ENCODE measurements at regions of chr1 and their contacts with region 1.

Region 1: DNA sequence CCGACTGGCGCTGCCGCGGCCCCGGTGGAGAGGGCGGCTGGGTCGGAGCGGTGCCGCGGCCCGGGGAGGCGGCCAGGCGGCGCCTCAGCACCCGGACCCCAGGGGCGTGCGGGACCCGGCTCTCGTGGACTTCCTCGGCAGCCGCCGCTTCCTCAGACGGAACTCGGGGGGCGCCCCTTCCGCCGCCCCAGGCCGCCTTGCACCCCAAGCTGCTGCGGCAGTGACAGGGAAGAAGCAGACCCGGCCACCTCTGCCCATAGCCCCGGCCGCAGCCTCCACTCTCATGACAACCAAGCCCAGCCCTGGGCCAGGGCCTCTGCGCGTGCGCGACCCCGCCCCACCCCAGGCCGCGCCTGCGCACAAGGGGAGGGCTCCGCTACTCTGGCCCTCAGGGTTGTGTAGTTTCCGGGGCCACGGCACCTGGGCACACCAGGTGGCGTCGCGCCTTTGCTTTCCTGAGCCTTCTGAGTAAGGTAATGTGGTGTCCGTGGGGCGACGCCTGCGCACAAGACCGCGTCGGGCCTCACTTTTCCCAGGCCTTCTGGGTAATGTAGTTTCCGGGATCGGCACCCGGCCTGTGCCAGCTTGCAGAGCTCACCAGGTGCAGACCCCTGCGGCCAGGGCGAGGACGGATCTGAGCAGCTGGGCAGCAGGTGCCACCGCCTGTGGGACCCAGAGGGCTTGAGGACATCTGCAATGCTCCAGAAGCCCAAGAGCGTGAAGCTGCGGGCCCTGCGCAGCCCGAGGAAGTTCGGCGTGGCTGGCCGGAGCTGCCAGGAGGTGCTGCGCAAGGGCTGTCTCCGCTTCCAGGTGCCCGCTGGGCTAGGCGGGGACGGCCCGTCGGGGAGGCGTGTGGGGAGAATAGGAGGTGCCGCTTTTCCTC is at the starts of genes CEP104 and DFFB:
- DNase-seq: peak; percentile 97
- ATAC-seq: peak; percentile 98
- H3K4me3 Mint-ChIP-seq: peak within 1 kb of the TSS; percentile 96
- H3K27ac Mint-ChIP-seq: peak within 1 kb of the TSS; percentile 91
- H3K4me1 Mint-ChIP-seq: peaks cover 32% of the 10 kb centered on the region
- H3K27me3 Mint-ChIP-seq: no peaks in the 10 kb centered on the region
- total RNA-seq, gene CEP104: 41.2 to 47.0 TPM
- total RNA-seq, gene DFFB: 8.8 to 10.2 TPM

Region 2: GRCh38 chr1:3900119-3900968 is 43.2 kb after region 1 on chr1 and contains the start of gene C1orf174:
- CTCF ChIA-PET with region 1: interaction called, 37 read pairs
- POLR2A ChIA-PET with region 1: interaction called, 12 read pairs
- DNase-seq: peak; percentile 96
- ATAC-seq: peak; percentile 87
- H3K4me3 Mint-ChIP-seq: peak within 1 kb of the TSS; percentile 96
- H3K27ac Mint-ChIP-seq: peak within 1 kb of the TSS; percentile 99
- H3K4me1 Mint-ChIP-seq: peaks cover 66% of the 10 kb centered on the region
- H3K27me3 Mint-ChIP-seq: no peaks in the 10 kb centered on the region
- total RNA-seq, gene C1orf174: 28.5 TPM

Region 3: DNA sequence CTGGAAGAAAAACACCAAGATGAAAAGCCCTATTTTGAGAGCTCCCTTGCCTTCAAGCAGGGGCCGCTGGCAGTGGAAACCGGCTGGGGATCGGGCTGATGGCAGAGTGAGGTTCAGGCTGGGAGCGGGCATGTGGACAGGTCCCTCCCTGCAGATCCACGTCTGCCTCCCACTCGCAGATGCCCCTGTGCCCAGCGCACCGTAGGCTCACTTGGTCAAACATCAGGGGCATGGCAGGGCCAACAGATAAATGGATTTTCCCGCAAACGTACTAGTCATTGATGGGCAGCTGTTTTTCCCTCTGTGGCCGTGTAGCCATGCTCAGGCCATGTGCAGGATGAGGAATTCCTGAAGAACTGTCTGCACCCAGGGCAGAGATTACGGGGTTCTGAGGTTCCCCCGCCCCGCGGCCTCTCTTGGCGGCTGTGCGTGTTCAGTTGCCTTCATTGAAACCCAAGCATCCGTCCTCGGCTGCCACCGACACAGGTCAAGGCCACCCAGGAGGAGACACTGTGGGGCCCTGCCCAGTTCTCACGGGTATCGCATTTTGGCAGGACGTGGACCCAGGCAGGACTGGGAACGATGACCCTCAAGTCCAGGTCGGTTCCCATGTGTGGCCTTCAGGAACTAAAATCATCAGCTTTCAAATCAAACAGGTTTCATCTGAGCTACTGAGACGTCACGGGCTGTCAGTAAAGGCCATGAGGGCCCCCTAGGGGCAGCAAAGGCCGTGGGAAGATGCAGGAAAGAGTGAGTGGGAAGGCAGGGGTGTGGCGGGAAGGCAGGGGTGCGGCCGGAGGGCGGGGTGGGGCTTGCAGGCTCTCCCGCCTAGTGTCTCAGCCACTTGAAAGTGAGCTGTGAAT is 49.8 kb after region 1 on chr1:
- CTCF ChIA-PET with region 1: interaction called, 37 read pairs
- POLR2A ChIA-PET with region 1: interaction called, 4 read pairs
- DNase-seq: no peak
- ATAC-seq: no peak
- H3K4me3 Mint-ChIP-seq: no peak overlapping the region
- H3K27ac Mint-ChIP-seq: no peak overlapping the region
- H3K4me1 Mint-ChIP-seq: peaks cover 39% of the 10 kb centered on the region
- H3K27me3 Mint-ChIP-seq: no peaks in the 10 kb centered on the region